A549 (cell line): ENCODE measurements at regions of chr15 and their contacts with region 1.

Region 1: GRCh38 chr15:81265944-81266775 is 57.8 kb downstream of the STARD5 start:
- DNase-seq: peak; percentile 82 to 90
- ATAC-seq: peak; percentile 92 to 98
- H3K4me3 ChIP-seq: no peak overlapping the region
- H3K27ac ChIP-seq: no peak overlapping the region
- H3K4me1 ChIP-seq: peaks cover 4% of the 10 kb centered on the region; the same call in 2 of the 3 replicates
- CTCF ChIP-seq: peak; percentile 79
- EP300 ChIP-seq: no peak
- POLR2A ChIP-seq: no peak
- RAD21 ChIP-seq: peak; percentile 87 to 96

Region 2: GRCh38 chr15:80977627-80978036 is 288.5 kb before region 1 on chr15:
- CTCF ChIA-PET with region 1: interaction called, 21 read pairs
- POLR2A ChIA-PET with region 1: no interaction called
- DNase-seq: peak; percentile 68 to 73
- ATAC-seq: peak; percentile 80 to 98
- H3K4me3 ChIP-seq: no peak overlapping the region
- H3K27ac ChIP-seq: no peak overlapping the region
- H3K4me1 ChIP-seq: peaks cover 6% of the 10 kb centered on the region; the same call in 2 of the 3 replicates
- CTCF ChIP-seq: peak; percentile 53
- EP300 ChIP-seq: no peak
- POLR2A ChIP-seq: no peak
- RAD21 ChIP-seq: peak; percentile 55 to 74

Region 3: GRCh38 chr15:81117136-81117535 is 149.0 kb before region 1 on chr15:
- CTCF ChIA-PET with region 1: interaction called, 243 read pairs
- POLR2A ChIA-PET with region 1: no interaction called
- DNase-seq: no peak
- ATAC-seq: no peak
- H3K4me3 ChIP-seq: no peak overlapping the region
- H3K27ac ChIP-seq: no peak overlapping the region
- H3K4me1 ChIP-seq: no peaks in the 10 kb centered on the region
- CTCF ChIP-seq: no peak
- EP300 ChIP-seq: no peak
- POLR2A ChIP-seq: no peak
- RAD21 ChIP-seq: no peak

Region 4: DNA sequence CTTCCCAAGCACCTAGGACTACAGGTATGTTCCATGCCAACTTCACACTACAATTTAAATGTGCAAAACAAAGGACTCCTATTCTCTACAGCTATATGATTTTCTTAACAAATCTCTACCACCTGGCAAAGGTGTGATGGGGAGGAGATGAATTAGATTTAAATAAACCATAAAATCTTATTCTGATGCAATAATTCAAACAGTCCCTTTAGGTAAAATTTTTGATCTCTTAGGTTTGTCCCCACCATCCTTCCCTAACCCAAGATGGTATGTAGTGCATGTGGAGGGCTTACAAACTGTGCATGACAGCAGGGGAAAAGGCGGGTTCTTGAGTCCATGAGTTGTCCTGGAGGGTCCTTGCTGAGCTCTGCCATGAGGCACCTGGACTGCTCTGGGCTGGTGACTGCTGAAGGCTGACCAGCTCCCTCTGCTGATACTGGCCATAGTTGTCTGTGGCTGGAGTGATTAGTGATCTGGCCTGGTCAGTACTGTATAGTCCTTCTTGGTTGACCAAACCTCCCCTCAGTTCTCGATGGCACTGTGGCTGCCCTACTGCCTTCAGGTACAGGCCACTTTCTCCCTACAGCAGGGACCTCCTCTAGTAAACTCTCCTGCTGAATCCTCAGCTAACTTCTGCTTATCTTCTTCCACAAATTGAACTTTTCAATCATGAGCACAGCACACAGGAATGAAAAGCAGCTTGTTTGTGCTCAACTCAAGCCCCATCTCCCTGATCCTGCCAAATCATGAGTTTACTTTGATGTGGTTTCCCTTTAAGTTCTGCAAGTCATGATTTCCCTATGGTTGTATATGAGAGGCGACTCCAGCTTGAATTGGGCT is 102.0 kb before region 1 on chr15:
- CTCF ChIA-PET with region 1: interaction called, 42 read pairs
- POLR2A ChIA-PET with region 1: interaction called, 3 read pairs
- DNase-seq: peak in 1 of 2 experiments; percentile 14
- ATAC-seq: peak; percentile 71 to 82
- H3K4me3 ChIP-seq: no peak overlapping the region
- H3K27ac ChIP-seq: no peak overlapping the region
- H3K4me1 ChIP-seq: no peaks in the 10 kb centered on the region
- CTCF ChIP-seq: no peak
- EP300 ChIP-seq: no peak
- POLR2A ChIP-seq: no peak
- RAD21 ChIP-seq: no peak

Region 5: GRCh38 chr15:81234819-81235218 is 31.3 kb before region 1 on chr15:
- CTCF ChIA-PET with region 1: interaction called, 29 read pairs
- POLR2A ChIA-PET with region 1: no interaction called
- DNase-seq: no peak
- ATAC-seq: 0 out of 6 replicates have a peak, but pooled peaks of 1 of the 2 experiments have one; percentile 56
- H3K4me3 ChIP-seq: no peak overlapping the region
- H3K27ac ChIP-seq: no peak overlapping the region
- H3K4me1 ChIP-seq: no peaks in the 10 kb centered on the region
- CTCF ChIP-seq: no peak
- EP300 ChIP-seq: no peak
- POLR2A ChIP-seq: no peak
- RAD21 ChIP-seq: no peak

Region 6: GRCh38 chr15:81301815-81302399 is 35.7 kb after region 1 on chr15:
- CTCF ChIA-PET with region 1: interaction called, 21 read pairs
- POLR2A ChIA-PET with region 1: no interaction called
- DNase-seq: no peak
- ATAC-seq: no peak
- H3K4me3 ChIP-seq: no peak overlapping the region
- H3K27ac ChIP-seq: no peak overlapping the region
- H3K4me1 ChIP-seq: peaks cover 13% of the 10 kb centered on the region
- CTCF ChIP-seq: no peak
- EP300 ChIP-seq: no peak
- POLR2A ChIP-seq: no peak
- RAD21 ChIP-seq: no peak

Region 7: GRCh38 chr15:81357223-81357622 is 91.1 kb after region 1 on chr15:
- CTCF ChIA-PET with region 1: interaction called, 14 read pairs
- POLR2A ChIA-PET with region 1: no interaction called
- DNase-seq: peak in 1 of 2 experiments; percentile 20
- ATAC-seq: peak in 1 of 2 experiments; percentile 63; a peak in 3 of 6 replicates
- H3K4me3 ChIP-seq: no peak overlapping the region
- H3K27ac ChIP-seq: no peak overlapping the region
- H3K4me1 ChIP-seq: no peaks in the 10 kb centered on the region
- CTCF ChIP-seq: no peak
- EP300 ChIP-seq: no peak
- POLR2A ChIP-seq: no peak
- RAD21 ChIP-seq: no peak

Region 8: GRCh38 chr15:81660976-81661375 is 394.8 kb after region 1 on chr15:
- CTCF ChIA-PET with region 1: no interaction called
- POLR2A ChIA-PET with region 1: no interaction called
- DNase-seq: no peak
- ATAC-seq: no peak
- H3K4me3 ChIP-seq: no peak overlapping the region
- H3K27ac ChIP-seq: no peak overlapping the region
- H3K4me1 ChIP-seq: no peaks in the 10 kb centered on the region
- CTCF ChIP-seq: no peak
- EP300 ChIP-seq: no peak
- POLR2A ChIP-seq: no peak
- RAD21 ChIP-seq: no peak